HEK293T (cell line): ENCODE measurements at regions of chr1 and their contacts with region 1.

Region 1: GRCh38 chr1:157992031-157992832 is 1.2 kb upstream of the KIRREL1 start:
- DNase-seq: peak; percentile 76

Region 2: GRCh38 chr1:157910270-157910669 is 82.0 kb before region 1 on chr1:
- CTCF ChIA-PET with region 1: no interaction called
- POLR2A ChIA-PET with region 1: no interaction called
- DNase-seq: no peak

Region 3: GRCh38 chr1:158019171-158019868 is 27.1 kb after region 1 on chr1:
- CTCF ChIA-PET with region 1: interaction called, 15 read pairs
- POLR2A ChIA-PET with region 1: interaction called, 3 read pairs
- DNase-seq: peak; percentile 38

Region 4: GRCh38 chr1:158035976-158036583 is 43.8 kb after region 1 on chr1:
- CTCF ChIA-PET with region 1: interaction called, 38 read pairs
- POLR2A ChIA-PET with region 1: interaction called, 6 read pairs
- DNase-seq: peak; percentile 36

Region 5: GRCh38 chr1:158087320-158087927 is 95.2 kb after region 1 on chr1:
- CTCF ChIA-PET with region 1: interaction called, 23 read pairs
- POLR2A ChIA-PET with region 1: no interaction called
- DNase-seq: peak; percentile 85

Region 6: GRCh38 chr1:158117854-158118704 is 125.8 kb after region 1 on chr1:
- CTCF ChIA-PET with region 1: interaction called, 55 read pairs
- POLR2A ChIA-PET with region 1: interaction called, 5 read pairs
- DNase-seq: peak; percentile 51